ENCODE measurements at regions of chr12 and their contacts with region 1.

Region 1: GRCh38 chr12:27305673-27306456 is 26.8 kb upstream of the BMAL2 start:
- DNase-seq: no peak
- H3K4me3 ChIP-seq: no peak overlapping the region
- H3K27ac ChIP-seq: no peak overlapping the region
- H3K4me1 ChIP-seq: no peaks in the 10 kb centered on the region
- H3K27me3 ChIP-seq: no peaks in the 10 kb centered on the region
- CTCF ChIP-seq: peak in 2 of 3 donors; percentile 27 to 55
- EP300 ChIP-seq: no peak
- POLR2A ChIP-seq: no peak

Region 2: GRCh38 chr12:26853303-26854030 is 452.4 kb before region 1 on chr12:
- intact Hi-C with region 1: loop called in 1 of 4 experiments (anchors 10 kb)
- DNase-seq: peak; percentile 33 to 66 (median 58)
- H3K4me3 ChIP-seq: no peak overlapping the region
- H3K27ac ChIP-seq: no peak overlapping the region
- H3K4me1 ChIP-seq: no peaks in the 10 kb centered on the region
- H3K27me3 ChIP-seq: no peaks in the 10 kb centered on the region
- CTCF ChIP-seq: peak; percentile 38 to 75 (median 74)
- EP300 ChIP-seq: no peak
- POLR2A ChIP-seq: no peak

Region 3: DNA sequence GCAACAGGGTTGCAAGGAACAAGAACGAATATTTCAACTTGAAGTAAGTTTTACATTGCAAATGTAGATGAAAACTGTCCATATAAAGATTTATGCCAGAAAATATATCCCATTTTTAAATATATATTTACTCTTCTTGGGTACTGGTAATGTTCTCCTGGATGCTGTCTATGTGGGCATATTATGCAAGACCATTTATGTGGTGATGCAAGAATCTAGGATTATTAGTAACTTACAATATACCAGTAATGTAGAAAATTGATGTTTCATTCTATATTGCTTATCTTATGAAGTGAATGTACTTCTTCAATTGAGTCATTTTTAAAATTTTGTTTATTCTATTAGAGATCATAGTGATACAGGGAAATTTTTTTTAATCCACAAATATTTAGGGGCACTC is 342.5 kb before region 1 on chr12:
- intact Hi-C with region 1: no loop called
- DNase-seq: no peak
- H3K4me3 ChIP-seq: no peak overlapping the region
- H3K27ac ChIP-seq: no peak overlapping the region
- H3K4me1 ChIP-seq: no peaks in the 10 kb centered on the region
- H3K27me3 ChIP-seq: no peaks in the 10 kb centered on the region
- CTCF ChIP-seq: no peak
- EP300 ChIP-seq: no peak
- POLR2A ChIP-seq: no peak

Region 4: DNA sequence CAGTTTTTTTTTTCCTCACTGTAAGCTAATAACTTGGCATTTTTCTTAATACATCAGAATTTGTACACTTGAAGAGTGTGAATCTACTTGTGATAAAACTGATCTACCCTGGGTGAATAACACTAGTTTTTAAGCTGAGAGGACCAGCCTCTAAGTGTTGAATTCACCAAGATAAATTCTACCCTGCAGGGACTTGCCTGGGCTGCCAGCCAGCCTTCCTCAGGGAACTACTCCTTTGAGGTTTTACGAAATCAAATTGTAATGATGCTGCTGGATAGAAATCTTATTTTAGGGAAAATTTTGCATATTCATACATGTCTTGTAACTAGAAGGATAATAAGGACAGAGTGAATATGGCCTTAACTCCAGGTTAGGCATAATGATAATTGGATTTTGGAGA is 281.6 kb before region 1 on chr12:
- intact Hi-C with region 1: loop called in 2 of 4 experiments (anchors 10 kb)
- DNase-seq: no peak
- H3K4me3 ChIP-seq: no peak overlapping the region
- H3K27ac ChIP-seq: no peak overlapping the region
- H3K4me1 ChIP-seq: peaks cover 7% of the 10 kb centered on the region
- H3K27me3 ChIP-seq: no peaks in the 10 kb centered on the region
- CTCF ChIP-seq: no peak
- EP300 ChIP-seq: no peak
- POLR2A ChIP-seq: no peak

Measured in ovary (tissue), 10 donors.